Mammary epithelial cell (primary cell): ENCODE measurements at regions of chr4 and their contacts with region 1.

Region 1: DNA sequence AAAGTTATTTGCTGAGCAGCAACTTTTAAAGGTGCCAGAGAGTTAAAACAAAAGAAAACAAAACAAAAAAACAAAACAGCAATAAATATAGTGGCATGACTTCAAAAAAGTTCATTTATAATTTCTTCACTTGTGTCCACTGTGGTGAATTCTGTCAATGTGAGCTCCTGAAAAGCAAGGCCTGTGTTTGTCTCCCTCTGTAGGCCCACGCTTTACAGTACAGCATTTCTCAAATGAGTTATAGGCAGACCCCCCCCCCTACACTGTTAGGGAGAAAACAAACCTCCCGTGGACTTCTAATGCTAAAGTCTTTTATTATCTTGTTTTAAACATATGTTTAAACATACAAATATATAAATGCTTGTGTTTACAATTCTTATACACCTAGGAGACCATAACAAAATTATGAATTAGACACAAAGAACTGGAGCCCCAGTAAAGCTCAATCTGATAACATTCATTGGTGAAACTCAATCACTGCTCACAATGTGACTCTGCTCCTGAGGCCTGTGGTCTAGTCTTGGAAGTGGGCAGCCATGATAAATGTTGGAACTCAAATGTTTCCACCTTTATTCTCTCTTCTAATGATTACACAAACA is 47.0 kb upstream of the SCOC start:
- DNase-seq: peak; percentile 22
- H3K4me3 ChIP-seq: no peak overlapping the region
- H3K27ac ChIP-seq: no peak overlapping the region
- H3K4me1 ChIP-seq: no peaks in the 10 kb centered on the region
- H3K27me3 ChIP-seq: no peaks in the 10 kb centered on the region
- CTCF ChIP-seq: peak; percentile 74 to 86

Region 2: DNA sequence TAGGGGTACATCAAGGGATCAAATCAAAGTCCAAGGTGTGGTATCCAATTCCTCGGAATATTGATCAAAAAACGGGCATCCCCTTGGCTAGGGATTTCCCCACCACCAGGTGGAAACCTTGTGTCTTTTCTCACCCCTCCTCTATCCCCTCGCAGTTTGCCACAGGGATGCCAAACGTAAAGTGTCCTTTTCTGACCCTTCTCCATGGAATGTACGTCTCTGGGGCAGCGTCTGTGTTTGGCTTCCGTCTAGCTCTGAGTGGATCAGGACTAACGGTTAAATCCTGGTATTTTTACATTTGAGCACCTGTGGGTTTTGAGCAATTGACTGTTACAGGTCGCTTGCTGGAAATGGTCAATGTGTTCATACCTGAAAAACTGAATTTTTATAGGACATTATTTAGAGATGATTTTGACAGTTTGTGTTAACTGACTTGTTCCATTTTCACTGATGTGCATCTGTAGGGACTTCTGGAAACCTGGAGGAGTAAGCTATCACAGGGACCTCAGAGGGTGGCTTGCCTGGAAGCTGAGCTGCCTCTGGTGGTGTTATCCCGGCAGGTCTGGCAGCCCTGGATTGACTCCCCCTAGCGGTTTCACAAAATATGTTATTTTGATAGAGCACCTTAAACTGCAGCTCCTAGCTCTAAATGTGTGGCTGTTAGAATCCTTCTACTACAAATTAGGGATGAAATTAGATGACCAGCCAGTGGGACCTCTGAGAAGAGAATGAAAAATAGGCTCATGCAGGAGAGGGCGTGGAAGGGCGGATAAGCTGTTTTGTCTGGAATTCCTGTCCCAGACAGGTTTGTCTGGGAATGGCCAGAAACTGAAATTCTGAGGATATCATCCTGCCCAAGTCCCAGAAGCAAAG is 669.6 kb before region 1 on chr4:
- CTCF ChIA-PET with region 1: no interaction called
- dilution Hi-C with region 1: no loop called
- in situ Hi-C with region 1: no loop called
- intact Hi-C with region 1: loop called (anchors 1 kb)
- DNase-seq: peak; percentile 73
- H3K4me3 ChIP-seq: peak overlapping the region in 1 of 3 experiments; percentile 14
- H3K27ac ChIP-seq: peak overlapping the region; percentile 75
- H3K4me1 ChIP-seq: peaks cover 28% of the 10 kb centered on the region
- H3K27me3 ChIP-seq: no peaks in the 10 kb centered on the region
- CTCF ChIP-seq: peak; percentile 94 to 96

Region 3: GRCh38 chr4:140012688-140013486 is 313.6 kb before region 1 on chr4:
- CTCF ChIA-PET with region 1: interaction called, 3 read pairs
- dilution Hi-C with region 1: no loop called
- in situ Hi-C with region 1: no loop called
- intact Hi-C with region 1: loop called (anchors 1 kb)
- DNase-seq: peak; percentile 71
- H3K4me3 ChIP-seq: no peak overlapping the region
- H3K27ac ChIP-seq: no peak overlapping the region
- H3K4me1 ChIP-seq: no peaks in the 10 kb centered on the region
- H3K27me3 ChIP-seq: peaks cover 2% of the 10 kb centered on the region
- CTCF ChIP-seq: peak; percentile 62 to 64

Region 4: GRCh38 chr4:140609548-140610425 is 283.3 kb after region 1 on chr4:
- CTCF ChIA-PET with region 1: no interaction called
- dilution Hi-C with region 1: no loop called
- in situ Hi-C with region 1: no loop called
- intact Hi-C with region 1: loop called (anchors 1 kb)
- DNase-seq: peak; percentile 45
- H3K4me3 ChIP-seq: no peak overlapping the region
- H3K27ac ChIP-seq: no peak overlapping the region
- H3K4me1 ChIP-seq: no peaks in the 10 kb centered on the region
- H3K27me3 ChIP-seq: peaks cover 2% of the 10 kb centered on the region
- CTCF ChIP-seq: peak; percentile 47 to 56